Heart left ventricle (tissue), 16 donors: ENCODE measurements at regions of chr2 and their contacts with region 1.

Region 1: DNA sequence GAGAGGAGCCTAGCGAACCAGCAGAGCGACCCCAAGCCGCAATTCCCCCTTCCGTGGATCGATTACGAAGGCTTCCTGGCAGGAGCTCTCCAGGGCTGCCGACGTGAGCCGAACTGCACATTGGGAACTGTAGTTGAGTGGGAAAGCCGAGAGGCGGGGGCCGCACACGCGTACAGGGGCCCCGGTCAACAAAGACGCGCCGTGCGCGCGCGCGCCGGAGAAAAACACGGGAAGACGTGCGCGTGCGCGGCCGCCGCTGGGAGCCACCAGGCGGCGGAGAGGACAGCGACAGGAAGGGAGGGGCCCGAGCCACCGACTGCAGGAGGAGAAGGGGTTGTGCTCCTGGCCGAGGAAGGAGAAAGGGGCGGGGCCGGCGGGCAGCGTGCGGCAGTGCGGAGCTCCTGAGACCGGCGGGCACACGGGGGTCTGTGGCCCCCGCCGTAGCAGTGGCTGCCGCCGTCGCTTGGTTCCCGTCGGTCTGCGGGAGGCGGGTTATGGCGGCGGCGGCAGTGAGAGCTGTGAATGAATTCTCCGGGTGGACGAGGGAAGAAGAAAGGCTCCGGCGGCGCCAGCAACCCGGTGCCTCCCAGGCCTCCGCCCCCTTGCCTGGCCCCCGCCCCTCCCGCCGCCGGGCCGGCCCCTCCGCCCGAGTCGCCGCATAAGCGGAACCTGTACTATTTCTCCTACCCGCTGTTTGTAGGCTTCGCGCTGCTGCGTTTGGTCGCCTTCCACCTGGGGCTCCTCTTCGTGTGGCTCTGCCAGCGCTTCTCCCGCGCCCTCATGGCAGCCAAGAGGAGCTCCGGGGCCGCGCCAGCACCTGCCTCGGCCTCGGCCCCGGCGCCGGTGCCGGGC is at the start of gene SPAST:
- DNase-seq: peak; percentile 97 to 99 (median 99)
- ATAC-seq: peak; percentile 97
- H3K4me3 ChIP-seq: peak within 1 kb of the TSS; percentile 65 to 94 (median 90)
- H3K27ac ChIP-seq: peak within 1 kb of the TSS; percentile 62 to 95 (median 90)
- H3K4me1 ChIP-seq: peaks cover 0 to 32% (median 13%) of the 10 kb centered on the region in 12 donors
- H3K27me3 ChIP-seq: no peaks in the 10 kb centered on the region
- CTCF ChIP-seq: peak; percentile 37 to 77 (median 56)
- POLR2A ChIP-seq: peak in 1 of 2 donors; percentile 69
- total RNA-seq, gene SPAST: 6.9 to 13.2 (median 10.2) TPM

Region 2: DNA sequence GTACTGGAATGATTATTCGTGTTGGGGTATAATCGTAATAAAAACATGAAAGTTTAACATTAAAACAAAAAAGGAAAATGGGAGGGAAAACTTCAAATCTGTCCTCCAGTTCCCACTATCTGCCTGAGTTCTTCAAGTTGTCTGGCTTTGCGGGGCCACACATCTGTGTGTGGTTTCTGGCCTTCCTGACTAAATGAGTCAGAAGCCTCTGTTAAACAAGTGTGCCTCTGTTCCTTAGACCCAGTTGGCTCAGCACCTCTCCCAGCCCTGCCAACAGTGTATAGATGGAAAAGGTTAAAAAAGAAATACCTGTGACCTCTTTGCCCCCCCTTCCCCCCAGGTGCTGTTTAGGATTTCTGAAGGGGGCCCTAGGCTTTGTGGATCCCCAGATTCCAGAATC is 679.2 kb before region 1 on chr2:
- intact Hi-C with region 1: no loop called
- DNase-seq: peak in 1 of 5 donors; percentile 15
- ATAC-seq: peak in 2 of 4 donors; percentile 59 to 77
- H3K4me3 ChIP-seq: no peak overlapping the region
- H3K27ac ChIP-seq: no peak overlapping the region
- H3K4me1 ChIP-seq: peaks cover 0 to 9% (median 0%) of the 10 kb centered on the region in 12 donors
- H3K27me3 ChIP-seq: no peaks in the 10 kb centered on the region
- CTCF ChIP-seq: no peak
- POLR2A ChIP-seq: no peak

Region 3: DNA sequence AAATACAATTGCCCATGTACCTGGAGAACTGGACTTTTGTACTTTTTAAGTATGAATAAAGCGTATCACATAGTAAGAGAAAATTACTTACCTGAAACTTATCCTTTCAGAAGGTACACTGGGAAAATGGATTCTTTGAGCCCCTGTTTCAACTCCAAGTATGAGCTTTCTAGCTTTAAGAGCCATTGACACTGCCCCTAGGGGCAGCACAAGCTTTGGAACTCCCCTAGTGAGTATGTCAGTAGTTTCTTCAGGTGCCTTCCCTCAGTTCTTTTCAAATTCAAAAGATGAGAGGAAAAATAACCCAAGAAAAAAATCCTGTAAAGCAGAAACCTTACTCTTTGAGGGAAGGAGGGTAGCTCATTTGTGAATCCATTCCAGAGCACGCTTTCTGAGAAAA is 176.8 kb before region 1 on chr2:
- intact Hi-C with region 1: loop called in 1 of 10 experiments (anchors 5 kb)
- DNase-seq: no peak
- ATAC-seq: no peak
- H3K4me3 ChIP-seq: no peak overlapping the region
- H3K27ac ChIP-seq: no peak overlapping the region
- H3K4me1 ChIP-seq: peaks cover 0 to 14% (median 0%) of the 10 kb centered on the region in 12 donors
- H3K27me3 ChIP-seq: no peaks in the 10 kb centered on the region
- CTCF ChIP-seq: peak in 6 of 12 donors; percentile 24 to 37 (median 25)
- POLR2A ChIP-seq: no peak

Region 4: GRCh38 chr2:32039447-32040219 is 23.9 kb before region 1 on chr2 and contains the start of gene DPY30:
- intact Hi-C with region 1: loop called in 5 of 10 experiments (anchors 1 to 2 kb)
- DNase-seq: peak; percentile 90 to 96 (median 95)
- ATAC-seq: peak; percentile 97 to 99 (median 98)
- H3K4me3 ChIP-seq: peak within 1 kb of the TSS; percentile 65 to 98 (median 79)
- H3K27ac ChIP-seq: peak within 1 kb of the TSS; percentile 13 to 90 (median 82)
- H3K4me1 ChIP-seq: peaks cover 0 to 15% (median 9%) of the 10 kb centered on the region in 12 donors
- H3K27me3 ChIP-seq: no peaks in the 10 kb centered on the region
- CTCF ChIP-seq: peak in 3 of 12 donors; percentile 6 to 21 (median 15)
- POLR2A ChIP-seq: peak in 1 of 2 donors; percentile 89
- total RNA-seq, gene DPY30: 36.8 to 52.8 (median 41.6) TPM

Region 5: DNA sequence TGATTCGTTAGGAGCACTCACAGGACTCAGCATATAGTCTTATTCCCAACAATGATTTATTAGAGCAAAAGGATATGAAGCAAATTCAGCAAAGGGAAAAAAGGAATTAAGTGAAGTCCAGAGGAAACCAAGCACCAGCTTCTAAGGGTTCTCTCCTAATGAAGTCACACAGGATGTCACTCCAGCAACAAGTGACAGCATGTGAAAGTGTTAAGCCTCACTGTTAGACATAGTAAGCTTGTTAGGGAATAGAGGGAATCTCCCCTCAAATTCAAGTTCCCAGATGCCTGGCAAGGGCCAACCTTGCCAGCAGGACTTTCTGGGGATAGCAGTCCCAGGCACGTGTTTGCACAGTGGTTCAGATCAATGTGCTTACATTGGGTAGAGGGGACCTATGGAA is 97.8 kb after region 1 on chr2:
- intact Hi-C with region 1: loop called in 3 of 10 experiments (anchors 1 to 5 kb)
- DNase-seq: no peak
- ATAC-seq: no peak
- H3K4me3 ChIP-seq: no peak overlapping the region
- H3K27ac ChIP-seq: no peak overlapping the region
- H3K4me1 ChIP-seq: peaks cover 0 to 11% (median 8%) of the 10 kb centered on the region in 12 donors
- H3K27me3 ChIP-seq: no peaks in the 10 kb centered on the region
- CTCF ChIP-seq: no peak
- POLR2A ChIP-seq: no peak

Region 6: GRCh38 chr2:32168513-32168912 is 105.0 kb after region 1 on chr2:
- intact Hi-C with region 1: loop called in 3 of 10 experiments (anchors 1 to 5 kb)
- DNase-seq: no peak
- ATAC-seq: no peak
- H3K4me3 ChIP-seq: no peak overlapping the region
- H3K27ac ChIP-seq: no peak overlapping the region
- H3K4me1 ChIP-seq: peaks cover 0 to 24% (median 17%) of the 10 kb centered on the region in 12 donors
- H3K27me3 ChIP-seq: no peaks in the 10 kb centered on the region
- CTCF ChIP-seq: no peak
- POLR2A ChIP-seq: no peak

Region 7: GRCh38 chr2:32356735-32357644 is 293.5 kb after region 1 on chr2 and contains the start of gene BIRC6:
- intact Hi-C with region 1: loop called in 1 of 10 experiments (anchors 5 kb)
- DNase-seq: peak; percentile 98 to 99 (median 99)
- ATAC-seq: peak; percentile 96 to 98 (median 97)
- H3K4me3 ChIP-seq: peak within 1 kb of the TSS; percentile 73 to 100 (median 95)
- H3K27ac ChIP-seq: peak within 1 kb of the TSS; percentile 85 to 98 (median 93)
- H3K4me1 ChIP-seq: peaks cover 10 to 48% (median 29%) of the 10 kb centered on the region in 12 donors
- H3K27me3 ChIP-seq: no peaks in the 10 kb centered on the region
- CTCF ChIP-seq: no peak
- POLR2A ChIP-seq: peak; percentile 29 to 89
- total RNA-seq, gene BIRC6: 36.1 to 68.0 (median 55.8) TPM